H1 (cell line): ENCODE measurements at regions of chrX and their contacts with region 1.

Region 1: GRCh38 chrX:41084044-41084892 is 977 bp upstream of the USP9X start:
- DNase-seq: peak; percentile 81 to 96
- H3K4me3 ChIP-seq: peak overlapping the region; percentile 67 to 100 (median 82)
- H3K27ac ChIP-seq: peak overlapping the region; percentile 100
- H3K4me1 ChIP-seq: peaks cover 0 to 2% (median 0%) of the 10 kb centered on the region in 4 experiments; a peak in 1 of 7 replicates
- H3K27me3 ChIP-seq: no peaks in the 10 kb centered on the region
- CTCF ChIP-seq: no peak
- EP300 ChIP-seq: peak in 1 of 2 experiments; percentile 66; a peak in 1 of 3 replicates
- POLR2A ChIP-seq: peak in 1 of 2 experiments; percentile 77; a peak in 2 of 3 replicates
- RAD21 ChIP-seq: no peak

Region 2: DNA sequence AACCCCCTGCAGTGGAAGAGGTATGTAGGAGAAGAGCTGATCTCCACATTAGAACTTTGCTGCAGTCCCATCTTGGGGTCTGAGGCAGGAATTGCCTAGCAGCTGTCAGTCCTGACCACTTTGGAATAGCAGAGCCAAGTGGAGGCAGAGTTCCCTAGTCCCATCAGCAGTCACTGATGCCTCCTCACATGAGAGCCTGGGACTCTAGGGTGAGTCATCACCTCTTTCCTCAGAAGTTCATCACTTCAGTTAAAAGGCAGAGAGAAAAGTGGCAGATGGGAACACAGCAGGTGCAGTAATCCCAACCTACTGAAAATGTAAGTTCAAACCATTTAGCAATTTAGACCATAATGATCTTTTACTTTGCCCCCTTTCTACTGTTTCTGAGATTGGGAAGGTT is 275.1 kb before region 1 on chrX:
- CTCF ChIA-PET with region 1: no interaction called
- POLR2A ChIA-PET with region 1: no interaction called
- DNase-seq: no peak
- H3K4me3 ChIP-seq: no peak overlapping the region
- H3K27ac ChIP-seq: no peak overlapping the region
- H3K4me1 ChIP-seq: peaks cover 0 to 2% (median 0%) of the 10 kb centered on the region in 4 experiments; a peak in 1 of 7 replicates
- H3K27me3 ChIP-seq: no peaks in the 10 kb centered on the region
- CTCF ChIP-seq: no peak
- EP300 ChIP-seq: no peak
- POLR2A ChIP-seq: no peak
- RAD21 ChIP-seq: no peak

Region 3: GRCh38 chrX:41027431-41027831 is 56.8 kb before region 1 on chrX:
- CTCF ChIA-PET with region 1: interaction called, 3 read pairs
- POLR2A ChIA-PET with region 1: interaction called, 19 read pairs
- DNase-seq: no peak
- H3K4me3 ChIP-seq: peak overlapping the region in 1 of 4 experiments; percentile 5; a peak in 1 of 8 replicates
- H3K27ac ChIP-seq: no peak overlapping the region; the same call in 1 of the 2 replicates
- H3K4me1 ChIP-seq: peaks cover 0 to 13% (median 3%) of the 10 kb centered on the region in 4 experiments; a peak in 4 of 7 replicates
- H3K27me3 ChIP-seq: no peaks in the 10 kb centered on the region
- CTCF ChIP-seq: no peak
- EP300 ChIP-seq: no peak
- POLR2A ChIP-seq: no peak
- RAD21 ChIP-seq: no peak

Region 4: GRCh38 chrX:41100200-41100599 is 15.9 kb after region 1 on chrX:
- CTCF ChIA-PET with region 1: no interaction called
- POLR2A ChIA-PET with region 1: interaction called, 18 read pairs
- DNase-seq: no peak
- H3K4me3 ChIP-seq: peak overlapping the region in 1 of 4 experiments; percentile 38; a peak in 2 of 8 replicates
- H3K27ac ChIP-seq: no peak overlapping the region
- H3K4me1 ChIP-seq: peaks cover 0 to 5% (median 2%) of the 10 kb centered on the region in 4 experiments; a peak in 2 of 7 replicates
- H3K27me3 ChIP-seq: no peaks in the 10 kb centered on the region
- CTCF ChIP-seq: no peak
- EP300 ChIP-seq: no peak
- POLR2A ChIP-seq: no peak
- RAD21 ChIP-seq: no peak

Region 5: GRCh38 chrX:41108007-41108406 is 23.7 kb after region 1 on chrX:
- CTCF ChIA-PET with region 1: no interaction called
- POLR2A ChIA-PET with region 1: interaction called, 11 read pairs
- DNase-seq: no peak
- H3K4me3 ChIP-seq: peak overlapping the region in 2 of 4 experiments; percentile 15 to 49; a peak in 4 of 8 replicates
- H3K27ac ChIP-seq: no peak overlapping the region
- H3K4me1 ChIP-seq: peaks cover 0 to 13% (median 6%) of the 10 kb centered on the region in 4 experiments; a peak in 2 of 7 replicates
- H3K27me3 ChIP-seq: no peaks in the 10 kb centered on the region
- CTCF ChIP-seq: no peak
- EP300 ChIP-seq: no peak
- POLR2A ChIP-seq: no peak
- RAD21 ChIP-seq: no peak

Region 6: GRCh38 chrX:41293269-41293668 is 209.0 kb after region 1 on chrX:
- CTCF ChIA-PET with region 1: no interaction called
- POLR2A ChIA-PET with region 1: no interaction called
- DNase-seq: peak in 1 of 2 experiments; percentile 46
- H3K4me3 ChIP-seq: no peak overlapping the region
- H3K27ac ChIP-seq: no peak overlapping the region
- H3K4me1 ChIP-seq: peaks cover 0 to 6% (median 3%) of the 10 kb centered on the region in 4 experiments; a peak in 3 of 7 replicates
- H3K27me3 ChIP-seq: no peaks in the 10 kb centered on the region
- CTCF ChIP-seq: peak; percentile 44 to 66 (median 49)
- EP300 ChIP-seq: no peak
- POLR2A ChIP-seq: no peak
- RAD21 ChIP-seq: peak; percentile 68 to 75